ENCODE measurements at regions of chr20 and their contacts with region 1.

Region 1: GRCh38 chr20:53915446-53916172 is 154.8 kb downstream of the BCAS1 start:
- DNase-seq: peak; percentile 89 to 92
- ATAC-seq: peak; percentile 94 to 97
- H3K4me3 ChIP-seq: peak overlapping the region; percentile 54
- H3K27ac ChIP-seq: peak overlapping the region; percentile 89 to 92
- H3K4me1 ChIP-seq: peaks cover 31% of the 10 kb centered on the region
- CTCF ChIP-seq: peak; percentile 96
- EP300 ChIP-seq: no peak
- POLR2A ChIP-seq: no peak
- RAD21 ChIP-seq: peak; percentile 94 to 97

Region 2: GRCh38 chr20:53570521-53571357 is 344.9 kb before region 1 on chr20:
- CTCF ChIA-PET with region 1: interaction called, 11 read pairs
- POLR2A ChIA-PET with region 1: no interaction called
- DNase-seq: no peak
- ATAC-seq: peak in 1 of 2 experiments; percentile 12; a peak in 1 of 6 replicates
- H3K4me3 ChIP-seq: no peak overlapping the region
- H3K27ac ChIP-seq: no peak overlapping the region
- H3K4me1 ChIP-seq: no peaks in the 10 kb centered on the region
- CTCF ChIP-seq: no peak
- EP300 ChIP-seq: no peak
- POLR2A ChIP-seq: no peak
- RAD21 ChIP-seq: no peak

Region 3: DNA sequence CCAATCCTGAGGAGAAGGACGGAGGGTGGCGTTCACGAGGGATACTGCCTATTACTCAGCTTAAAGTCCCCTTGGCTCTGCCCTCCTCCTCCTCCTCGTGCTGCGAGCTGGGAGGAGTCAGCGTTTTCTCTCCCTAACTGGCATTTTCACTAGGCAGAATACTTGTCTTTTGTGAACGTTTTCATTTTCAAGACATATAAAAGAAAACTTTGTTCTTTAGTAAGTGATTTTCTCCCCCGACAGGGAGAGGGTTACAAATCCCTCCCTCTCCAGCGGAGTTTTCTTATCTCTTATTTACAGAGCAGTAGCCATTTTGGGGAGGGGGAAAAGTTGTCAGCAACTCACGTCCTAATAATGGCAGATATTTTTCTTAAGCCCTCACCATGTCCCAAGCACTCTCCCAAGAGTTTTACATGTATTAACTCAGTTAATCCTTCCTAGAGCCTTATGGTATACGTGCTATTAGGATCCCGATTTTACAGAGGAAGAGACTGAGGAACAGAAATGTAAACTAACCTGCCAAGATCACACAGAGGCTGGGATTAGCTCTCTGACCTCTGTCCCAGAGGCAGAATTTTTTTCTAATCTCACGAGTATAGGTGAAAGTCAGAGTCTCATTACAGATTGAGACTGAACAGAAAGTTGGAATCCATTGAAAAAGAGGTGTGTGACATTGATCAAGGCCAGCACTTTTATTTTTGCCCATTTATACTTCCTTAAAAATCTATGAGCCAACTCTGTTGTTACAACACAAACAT is 292.0 kb before region 1 on chr20:
- CTCF ChIA-PET with region 1: interaction called, 33 read pairs
- POLR2A ChIA-PET with region 1: interaction called, 5 read pairs
- DNase-seq: peak; percentile 71 to 88
- ATAC-seq: peak; percentile 83
- H3K4me3 ChIP-seq: peak overlapping the region; percentile 37
- H3K27ac ChIP-seq: peak overlapping the region; percentile 93 to 98
- H3K4me1 ChIP-seq: peaks cover 38% of the 10 kb centered on the region
- CTCF ChIP-seq: 0 out of 3 replicates have a peak, but pooled peaks have one; percentile 24
- EP300 ChIP-seq: no peak
- POLR2A ChIP-seq: no peak; the same call in 1 of the 2 replicates
- RAD21 ChIP-seq: peak; percentile 38 to 49; a peak in 4 of 5 replicates

Region 4: DNA sequence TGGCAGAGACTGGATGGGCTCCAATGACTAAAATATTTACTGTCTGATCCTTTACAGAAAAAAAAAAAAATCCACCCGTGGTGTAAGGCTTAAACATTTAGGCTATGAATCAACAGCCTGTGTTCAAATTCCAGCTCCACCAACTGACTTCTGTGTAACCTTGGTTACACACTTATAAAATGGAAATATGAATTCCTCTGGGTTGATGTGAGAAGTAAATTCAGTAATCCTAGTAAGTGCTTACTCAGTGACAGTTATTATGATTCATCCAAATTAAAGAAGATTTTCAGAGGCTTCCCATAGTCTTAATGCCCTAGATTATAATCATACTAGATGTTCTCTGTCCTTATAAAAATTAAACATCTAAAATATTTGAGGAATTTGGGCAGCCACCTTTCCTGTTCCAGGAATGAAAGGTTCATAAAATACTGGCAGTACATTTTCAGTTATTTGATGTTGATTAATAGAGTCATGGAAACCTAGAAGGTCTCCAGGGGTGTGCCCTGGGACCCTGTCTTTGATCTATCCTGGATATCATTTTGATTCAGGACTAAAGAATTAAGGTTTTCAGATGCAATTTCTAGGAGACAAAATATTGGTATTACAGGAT is 141.7 kb before region 1 on chr20:
- CTCF ChIA-PET with region 1: interaction called, 12 read pairs
- POLR2A ChIA-PET with region 1: interaction called, 5 read pairs
- DNase-seq: peak; percentile 91 to 94
- ATAC-seq: peak; percentile 87 to 95
- H3K4me3 ChIP-seq: no peak overlapping the region
- H3K27ac ChIP-seq: peak overlapping the region; percentile 92
- H3K4me1 ChIP-seq: peaks cover 52% of the 10 kb centered on the region
- CTCF ChIP-seq: no peak
- EP300 ChIP-seq: peak; percentile 71 to 81; a peak in 4 of 5 replicates
- POLR2A ChIP-seq: no peak
- RAD21 ChIP-seq: peak; percentile 31 to 54; a peak in 3 of 5 replicates

Region 5: DNA sequence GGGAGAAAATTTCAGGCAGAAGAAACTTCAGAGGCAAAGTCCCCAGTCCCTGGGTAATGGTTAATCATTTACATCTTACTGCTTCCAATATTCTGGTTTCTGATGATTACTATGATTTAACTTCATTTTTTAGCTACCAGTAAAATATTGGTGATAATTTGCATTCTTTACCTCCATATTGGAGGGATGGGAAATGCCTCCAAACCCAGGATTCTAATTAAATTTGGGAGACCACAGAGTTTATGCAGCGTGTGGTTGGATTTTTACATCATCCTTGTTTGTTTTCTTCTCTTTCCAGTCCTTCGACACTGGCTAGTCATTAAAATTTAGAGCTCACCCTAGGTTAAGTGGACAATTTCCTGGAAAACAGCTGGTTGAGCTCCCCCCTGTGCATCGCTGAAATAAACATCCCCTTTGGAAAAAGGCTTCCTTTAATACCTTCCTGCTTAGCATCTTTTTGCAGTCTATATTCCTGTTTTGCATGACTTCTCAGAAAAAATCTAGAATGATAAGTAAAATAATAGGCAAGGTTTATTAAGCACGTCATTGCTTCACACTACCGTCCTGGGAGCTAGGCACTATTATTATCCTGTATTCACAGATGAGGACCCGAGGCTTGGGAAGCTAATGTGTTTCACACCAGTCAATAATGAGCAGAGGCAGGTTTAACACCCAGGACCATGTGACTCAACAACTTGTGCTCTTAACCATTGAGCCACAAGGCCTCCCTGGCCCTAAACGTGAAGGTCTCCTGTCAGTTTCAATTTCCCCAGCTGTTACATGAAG is 36.8 kb before region 1 on chr20:
- CTCF ChIA-PET with region 1: interaction called, 20 read pairs
- POLR2A ChIA-PET with region 1: no interaction called
- DNase-seq: no peak
- ATAC-seq: no peak
- H3K4me3 ChIP-seq: no peak overlapping the region
- H3K27ac ChIP-seq: peak overlapping the region in 1 of 2 experiments; percentile 61; a peak in 3 of 6 replicates
- H3K4me1 ChIP-seq: peaks cover 20% of the 10 kb centered on the region; the same call in 2 of the 3 replicates
- CTCF ChIP-seq: no peak
- EP300 ChIP-seq: no peak
- POLR2A ChIP-seq: no peak
- RAD21 ChIP-seq: no peak

Region 6: DNA sequence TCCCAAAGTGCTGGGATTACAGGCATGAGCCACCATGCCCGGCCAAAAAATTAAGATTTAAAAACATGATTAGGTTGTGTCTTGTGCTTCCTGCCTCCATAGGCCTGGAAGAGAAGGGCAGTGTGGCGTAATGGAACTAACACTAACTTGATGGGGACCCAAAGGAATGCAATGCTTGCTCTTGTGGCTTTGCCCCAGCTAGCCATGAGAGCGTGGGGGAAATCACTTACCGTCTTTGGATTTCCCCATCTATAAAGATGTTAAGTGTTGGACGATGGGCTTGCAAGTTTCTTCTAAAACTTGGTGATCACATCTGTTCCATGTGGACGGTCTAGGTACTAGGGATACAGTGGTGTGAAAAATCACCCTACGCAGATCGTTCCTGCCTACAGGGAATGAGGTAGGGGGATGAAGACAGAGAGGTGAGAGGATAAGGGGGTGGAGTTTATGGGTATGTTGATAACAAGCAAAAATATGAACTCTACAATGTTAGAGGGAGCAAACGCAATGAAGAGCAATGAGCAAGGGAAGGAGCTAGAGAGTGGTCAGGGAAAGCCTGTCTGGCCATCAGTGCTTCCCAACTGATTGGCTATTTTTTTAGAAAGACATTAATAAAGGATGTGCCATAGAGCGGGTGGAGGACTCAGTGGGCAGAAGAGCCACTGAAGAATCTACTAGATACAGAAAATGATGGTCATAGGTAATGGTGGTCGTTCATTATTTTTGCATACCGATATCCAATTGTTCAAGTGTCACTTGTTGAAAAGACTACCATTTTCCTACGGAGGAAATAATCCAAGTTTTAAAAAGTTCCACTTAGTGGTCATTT is 10.4 kb before region 1 on chr20:
- CTCF ChIA-PET with region 1: interaction called, 38 read pairs
- POLR2A ChIA-PET with region 1: interaction called, 4 read pairs
- DNase-seq: no peak
- ATAC-seq: no peak
- H3K4me3 ChIP-seq: no peak overlapping the region
- H3K27ac ChIP-seq: peak overlapping the region; percentile 77 to 80
- H3K4me1 ChIP-seq: peaks cover 49% of the 10 kb centered on the region
- CTCF ChIP-seq: no peak
- EP300 ChIP-seq: no peak
- POLR2A ChIP-seq: no peak
- RAD21 ChIP-seq: no peak